Caco-2 (cell line): ENCODE measurements at regions of chr5 and their contacts with region 1.

Region 1: GRCh38 chr5:126422989-126423788 is at the start of gene GRAMD2B:
- DNase-seq: peak; percentile 79 to 86
- H3K4me3 ChIP-seq: peak within 1 kb of the TSS; percentile 40
- H3K4me3 Mint-ChIP-seq: peak within 1 kb of the TSS; percentile 84
- H3K27ac Mint-ChIP-seq: peak within 1 kb of the TSS; percentile 36
- H3K4me1 ChIP-seq: no peaks in the 10 kb centered on the region
- H3K4me1 Mint-ChIP-seq: no peaks in the 10 kb centered on the region
- H3K27me3 ChIP-seq: no peaks in the 10 kb centered on the region
- H3K27me3 Mint-ChIP-seq: no peaks in the 10 kb centered on the region
- CTCF ChIP-seq: no peak
- total RNA-seq, gene GRAMD2B: 3.0 TPM in 2 replicates

Region 2: GRCh38 chr5:126143622-126144021 is 279.6 kb before region 1 on chr5:
- CTCF ChIA-PET with region 1: no interaction called
- POLR2A ChIA-PET with region 1: no interaction called
- intact Hi-C with region 1: no loop called
- DNase-seq: no peak
- H3K4me3 ChIP-seq: no peak overlapping the region
- H3K4me3 Mint-ChIP-seq: no peak overlapping the region
- H3K27ac Mint-ChIP-seq: no peak overlapping the region
- H3K4me1 ChIP-seq: no peaks in the 10 kb centered on the region
- H3K4me1 Mint-ChIP-seq: no peaks in the 10 kb centered on the region
- H3K27me3 ChIP-seq: no peaks in the 10 kb centered on the region
- H3K27me3 Mint-ChIP-seq: peaks cover 2% of the 10 kb centered on the region
- CTCF ChIP-seq: no peak

Region 3: GRCh38 chr5:126228934-126229333 is 194.3 kb before region 1 on chr5:
- CTCF ChIA-PET with region 1: no interaction called
- POLR2A ChIA-PET with region 1: no interaction called
- intact Hi-C with region 1: no loop called
- DNase-seq: no peak
- H3K4me3 ChIP-seq: no peak overlapping the region
- H3K4me3 Mint-ChIP-seq: no peak overlapping the region
- H3K27ac Mint-ChIP-seq: no peak overlapping the region
- H3K4me1 ChIP-seq: no peaks in the 10 kb centered on the region
- H3K4me1 Mint-ChIP-seq: no peaks in the 10 kb centered on the region
- H3K27me3 ChIP-seq: no peaks in the 10 kb centered on the region
- H3K27me3 Mint-ChIP-seq: no peaks in the 10 kb centered on the region
- CTCF ChIP-seq: no peak

Region 4: GRCh38 chr5:126365465-126366200 is 57.6 kb before region 1 on chr5:
- CTCF ChIA-PET with region 1: no interaction called
- POLR2A ChIA-PET with region 1: no interaction called
- intact Hi-C with region 1: loop called (anchors 1 kb)
- DNase-seq: peak in 1 of 2 experiments; percentile 40
- H3K4me3 ChIP-seq: no peak overlapping the region
- H3K4me3 Mint-ChIP-seq: no peak overlapping the region
- H3K27ac Mint-ChIP-seq: no peak overlapping the region
- H3K4me1 ChIP-seq: peaks cover 43% of the 10 kb centered on the region
- H3K4me1 Mint-ChIP-seq: peaks cover 19% of the 10 kb centered on the region
- H3K27me3 ChIP-seq: no peaks in the 10 kb centered on the region
- H3K27me3 Mint-ChIP-seq: no peaks in the 10 kb centered on the region
- CTCF ChIP-seq: no peak

Region 5: DNA sequence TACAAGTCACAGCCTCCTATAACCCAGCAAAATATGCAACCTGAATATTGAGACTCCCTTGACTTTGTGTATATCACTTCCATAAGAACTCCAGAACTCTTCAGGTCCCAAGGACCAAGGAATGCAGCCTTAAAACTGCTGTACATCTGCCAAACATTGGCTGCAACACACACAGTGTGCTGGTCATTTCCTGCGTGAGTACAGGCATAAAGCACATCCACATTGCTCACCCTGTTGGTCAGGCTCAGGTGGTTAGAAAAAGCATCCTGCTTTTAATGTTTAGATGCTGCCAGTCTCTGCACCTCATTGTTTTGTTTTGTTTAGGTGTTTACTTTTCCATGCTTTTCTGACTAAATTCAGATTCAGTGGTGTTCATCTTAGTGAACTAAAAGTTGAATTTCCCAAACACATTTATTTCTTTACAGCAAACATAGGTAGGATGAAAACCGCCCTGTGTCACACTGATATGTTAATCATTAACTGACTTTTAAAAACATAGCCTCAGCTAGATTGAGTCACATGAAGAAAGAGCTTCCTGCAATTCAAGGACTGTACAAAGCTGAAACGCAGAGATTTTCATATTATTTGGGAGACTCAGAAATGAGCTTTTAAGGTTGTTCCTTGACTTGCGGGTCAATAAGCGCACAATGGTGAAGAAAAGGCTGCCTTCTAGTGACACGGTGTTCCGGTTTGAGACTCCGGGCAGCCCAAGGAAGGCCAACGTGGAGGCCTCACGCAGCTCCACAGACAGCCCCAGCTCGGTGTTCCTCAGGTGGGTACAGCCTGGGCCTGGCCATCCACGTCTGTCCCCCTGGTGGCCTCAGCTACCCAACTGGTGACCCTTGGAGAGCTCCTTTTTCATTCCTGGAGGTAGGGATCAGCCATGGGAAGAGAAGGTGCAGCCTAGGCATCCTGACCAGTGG is 52.1 kb before region 1 on chr5:
- CTCF ChIA-PET with region 1: no interaction called
- POLR2A ChIA-PET with region 1: no interaction called
- intact Hi-C with region 1: loop called (anchors 2 kb)
- DNase-seq: peak; percentile 20 to 55
- H3K4me3 ChIP-seq: peak overlapping the region; percentile 26
- H3K4me3 Mint-ChIP-seq: peak overlapping the region; percentile 65
- H3K27ac Mint-ChIP-seq: peak overlapping the region; percentile 50
- H3K4me1 ChIP-seq: peaks cover 44% of the 10 kb centered on the region
- H3K4me1 Mint-ChIP-seq: peaks cover 28% of the 10 kb centered on the region
- H3K27me3 ChIP-seq: no peaks in the 10 kb centered on the region
- H3K27me3 Mint-ChIP-seq: no peaks in the 10 kb centered on the region
- CTCF ChIP-seq: peak in 1 of 2 experiments; percentile 13

Region 6: GRCh38 chr5:126462239-126463014 is 39.2 kb after region 1 on chr5:
- CTCF ChIA-PET with region 1: no interaction called
- POLR2A ChIA-PET with region 1: no interaction called
- intact Hi-C with region 1: loop called (anchors 2 kb)
- DNase-seq: no peak
- H3K4me3 ChIP-seq: no peak overlapping the region
- H3K4me3 Mint-ChIP-seq: no peak overlapping the region
- H3K27ac Mint-ChIP-seq: no peak overlapping the region
- H3K4me1 ChIP-seq: peaks cover 9% of the 10 kb centered on the region; the same call in 1 of the 2 replicates
- H3K4me1 Mint-ChIP-seq: peaks cover 23% of the 10 kb centered on the region
- H3K27me3 ChIP-seq: no peaks in the 10 kb centered on the region
- H3K27me3 Mint-ChIP-seq: no peaks in the 10 kb centered on the region
- CTCF ChIP-seq: no peak

Region 7: DNA sequence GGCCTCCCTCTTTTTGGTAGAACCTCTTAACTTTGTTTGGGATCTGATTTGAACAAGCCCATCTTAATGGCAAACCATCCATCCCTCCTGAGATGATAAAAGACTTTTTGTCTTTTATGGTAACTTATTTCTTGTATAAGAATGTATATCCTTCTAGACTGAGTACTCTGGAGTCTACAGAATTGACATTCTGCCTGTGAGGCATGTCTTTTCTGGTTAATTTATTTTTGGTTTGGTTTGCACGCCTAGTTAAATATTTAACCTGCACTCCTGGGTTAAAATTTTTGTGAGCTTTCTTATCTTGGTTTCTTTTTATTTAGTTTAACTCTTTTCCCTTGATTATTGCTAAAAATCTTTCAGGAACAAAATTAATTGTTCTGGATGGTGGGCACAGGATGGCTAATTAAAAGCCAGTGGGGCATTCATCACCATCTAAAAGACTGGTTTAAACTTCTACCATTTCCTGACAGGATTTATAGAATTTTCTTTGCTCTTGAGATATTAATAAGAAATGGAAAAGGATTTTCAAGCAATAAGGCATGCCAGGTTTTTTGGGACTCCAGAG is 227.9 kb after region 1 on chr5:
- CTCF ChIA-PET with region 1: no interaction called
- POLR2A ChIA-PET with region 1: no interaction called
- intact Hi-C with region 1: no loop called
- DNase-seq: no peak
- H3K4me3 ChIP-seq: no peak overlapping the region
- H3K4me3 Mint-ChIP-seq: no peak overlapping the region
- H3K27ac Mint-ChIP-seq: no peak overlapping the region
- H3K4me1 ChIP-seq: peaks cover 21% of the 10 kb centered on the region
- H3K4me1 Mint-ChIP-seq: peaks cover 20% of the 10 kb centered on the region
- H3K27me3 ChIP-seq: no peaks in the 10 kb centered on the region
- H3K27me3 Mint-ChIP-seq: no peaks in the 10 kb centered on the region
- CTCF ChIP-seq: no peak